GM10248 (cell line): ENCODE measurements at regions of chr12 and their contacts with region 1.

Region 1: DNA sequence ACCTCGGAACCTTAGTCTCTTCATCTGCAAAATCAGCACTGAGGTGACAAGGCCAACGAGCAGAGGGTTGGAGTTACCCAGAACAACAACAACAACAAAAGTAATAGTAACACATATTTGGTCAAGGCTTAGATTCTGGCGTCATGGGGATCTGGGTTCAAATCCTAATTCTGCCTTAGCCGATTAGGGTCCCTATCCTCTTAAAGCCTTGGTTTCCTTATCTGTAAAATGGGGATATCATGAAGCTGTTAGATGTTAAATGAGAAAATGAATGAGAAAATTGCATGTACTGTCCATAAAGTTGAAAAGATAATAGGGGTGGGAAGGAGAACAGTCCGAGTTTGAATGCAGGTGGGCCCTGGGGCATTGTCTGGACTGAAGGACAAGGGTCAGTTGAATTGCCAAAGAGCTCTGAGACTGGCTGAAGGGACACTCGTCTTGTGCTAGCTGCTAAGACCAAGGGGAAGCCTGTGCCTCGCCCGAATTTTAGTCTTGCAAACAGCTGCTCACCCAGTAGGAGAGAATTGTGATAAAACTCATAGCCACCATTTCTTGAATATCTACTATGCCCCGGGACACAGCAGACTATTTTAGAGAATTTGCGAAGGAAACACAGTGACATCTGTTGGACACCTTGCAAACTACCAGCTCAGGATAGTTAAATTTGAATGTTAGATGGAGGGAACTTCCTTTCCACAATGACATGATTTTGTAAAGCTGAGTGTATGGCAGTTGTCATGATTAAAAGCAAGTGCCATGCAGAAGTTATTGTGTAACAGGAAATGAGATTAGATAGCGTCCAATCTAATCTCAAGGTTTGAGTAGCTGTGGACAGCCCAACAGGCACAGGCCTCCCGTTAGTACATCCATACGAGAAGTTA is 6.8 kb upstream of the HNF1A start:
- DNase-seq: peak; percentile 80
- CTCF ChIP-seq: peak; percentile 73

Region 2: DNA sequence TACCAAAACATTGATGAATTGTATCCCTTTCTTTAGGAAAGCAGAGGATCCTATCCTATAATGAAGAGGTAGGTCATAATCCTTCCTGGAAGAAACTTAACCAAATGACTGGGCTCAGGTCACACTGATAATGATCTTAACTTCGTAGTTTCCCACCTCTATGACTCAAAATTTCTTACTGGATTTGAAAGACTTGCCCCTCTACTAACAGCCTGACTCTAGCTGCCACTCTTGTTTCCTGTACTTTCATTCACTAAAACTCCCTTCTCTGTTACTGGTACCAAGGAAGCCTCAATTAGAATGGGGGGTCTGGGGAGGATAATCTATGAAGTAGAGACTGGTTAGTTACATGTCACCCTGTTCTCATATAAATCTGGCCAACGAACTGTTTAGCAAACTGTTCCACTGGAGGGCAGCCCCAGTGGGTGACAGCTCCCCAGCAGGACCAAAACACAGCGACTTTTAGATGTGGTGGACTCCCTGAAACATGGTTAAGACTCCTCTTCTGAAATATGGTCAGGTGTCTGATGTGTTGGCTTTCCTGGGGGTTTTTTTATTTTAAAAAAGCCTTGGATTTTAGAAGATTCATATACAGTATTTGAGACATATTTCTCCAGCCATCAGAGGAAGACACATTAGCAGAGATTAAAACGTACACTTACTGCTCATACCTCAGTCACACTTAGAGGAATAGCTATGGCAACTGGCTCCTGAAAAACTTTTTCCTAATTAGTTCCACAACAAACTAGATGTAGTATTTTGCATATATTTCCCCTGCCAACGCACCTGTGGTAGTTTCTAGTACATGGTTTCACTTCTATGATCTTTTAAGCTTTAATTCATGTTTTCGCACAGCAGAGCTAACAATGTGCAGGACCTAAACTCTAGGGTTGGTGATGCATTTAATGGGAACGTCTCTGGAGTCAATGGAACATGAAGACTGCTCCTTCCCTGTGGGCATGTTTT is 173.6 kb before region 1 on chr12:
- CTCF ChIA-PET with region 1: interaction called, 14 read pairs
- POLR2A ChIA-PET with region 1: no interaction called
- DNase-seq: peak; percentile 22
- CTCF ChIP-seq: no peak

Region 3: DNA sequence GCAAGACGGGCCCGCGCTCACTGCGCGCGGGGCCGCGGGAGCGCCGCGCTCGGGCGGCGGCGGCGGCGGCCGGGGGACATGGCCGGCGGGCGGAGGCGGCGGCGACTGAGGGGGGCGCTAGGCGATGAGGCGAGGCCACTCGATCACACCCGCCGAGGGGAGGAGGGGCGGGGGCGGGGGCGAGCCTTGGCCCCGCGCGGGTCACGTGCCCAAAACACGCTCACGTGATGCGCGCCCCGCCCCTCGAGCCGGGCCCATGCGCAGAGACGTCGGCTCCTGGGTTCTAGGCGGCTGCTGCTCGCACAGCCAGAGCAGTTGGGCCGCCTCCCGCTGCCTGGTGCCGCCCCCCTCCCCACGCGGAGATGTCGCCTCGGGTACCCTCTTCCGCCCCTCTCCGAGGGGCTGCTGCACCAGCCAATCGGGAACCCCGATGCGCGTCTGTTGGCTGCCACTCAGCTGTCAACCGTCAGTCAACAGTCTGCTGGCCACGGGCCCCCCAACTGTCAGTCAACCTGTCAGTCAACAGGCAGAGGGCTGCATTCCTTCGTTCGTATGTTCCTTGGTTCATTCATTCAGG is 67.3 kb before region 1 on chr12 and contains the start of gene SPPL3:
- CTCF ChIA-PET with region 1: interaction called, 11 read pairs
- POLR2A ChIA-PET with region 1: interaction called, 7 read pairs
- DNase-seq: peak; percentile 96
- CTCF ChIP-seq: peak; percentile 44

Region 4: DNA sequence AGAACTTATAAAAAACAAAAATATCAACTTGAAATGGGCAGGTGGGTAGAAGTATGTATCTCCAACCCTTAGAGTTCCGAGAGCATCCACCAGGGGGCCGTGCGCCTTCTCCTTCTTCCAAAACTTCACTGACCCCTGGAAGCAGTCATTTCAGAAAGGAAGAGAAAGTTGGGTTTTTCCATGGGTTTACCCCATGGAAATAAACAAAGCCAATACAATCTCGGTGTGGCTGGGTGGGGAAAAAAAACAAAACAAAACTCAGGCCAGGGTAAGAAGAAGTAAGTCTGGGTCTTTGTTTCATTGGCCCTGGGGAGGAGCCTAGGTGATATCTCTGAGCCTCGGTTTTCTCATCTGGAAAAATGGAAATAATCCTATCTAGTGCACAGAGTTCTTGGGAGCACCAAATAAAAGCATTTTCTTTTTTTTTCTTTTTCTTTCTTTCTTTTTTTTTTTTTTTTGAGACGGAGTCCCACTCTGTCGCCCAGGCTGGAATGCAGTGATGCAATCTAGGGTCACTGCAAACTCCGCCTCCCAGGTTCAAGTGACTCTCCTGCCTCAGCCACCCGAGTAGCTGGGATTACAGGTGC is 26.8 kb before region 1 on chr12:
- CTCF ChIA-PET with region 1: interaction called, 20 read pairs
- POLR2A ChIA-PET with region 1: no interaction called
- DNase-seq: peak; percentile 67
- CTCF ChIP-seq: peak; percentile 46

Region 5: DNA sequence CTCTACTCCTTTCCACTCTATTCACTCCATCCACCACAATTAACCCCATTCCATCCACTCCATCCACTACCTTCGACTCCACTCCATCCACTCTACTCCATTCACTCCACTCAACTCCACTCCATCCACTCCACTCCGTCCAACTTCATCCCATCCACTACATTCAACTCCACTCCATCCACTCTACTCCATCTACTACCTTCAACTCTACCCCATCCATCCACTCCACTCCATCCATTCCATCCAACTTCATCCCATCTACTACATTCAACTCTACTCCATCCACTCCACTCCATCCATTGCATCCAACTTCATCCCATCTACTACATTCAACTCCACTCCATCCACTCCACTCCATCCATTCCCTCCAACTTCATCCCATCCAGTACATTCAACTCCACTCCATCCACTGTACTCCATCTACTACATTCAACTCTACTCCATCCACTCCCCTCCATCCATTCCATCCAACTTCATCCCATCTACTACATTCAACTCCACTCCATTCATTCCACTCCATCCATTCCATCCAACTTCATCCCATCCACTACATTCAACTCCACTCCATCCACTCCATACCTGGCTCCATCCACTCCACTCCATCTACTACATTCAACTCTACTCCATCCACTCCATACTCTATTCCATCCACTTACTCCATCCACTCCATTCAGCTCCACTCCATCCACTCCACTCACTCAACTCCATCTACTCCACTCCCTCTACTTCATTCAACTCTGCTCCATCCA is 23.2 kb after region 1 on chr12:
- CTCF ChIA-PET with region 1: interaction called, 10 read pairs
- POLR2A ChIA-PET with region 1: no interaction called
- DNase-seq: no peak
- CTCF ChIP-seq: no peak